Activated CD4-positive, alpha-beta T cell treated with anti-CD3 and anti-CD28 coated beads for 36 hours (primary cell): ENCODE measurements at regions of chr6 and their contacts with region 1.

Region 1: GRCh38 chr6:56902641-56903464 is 52.1 kb upstream of the BEND6 start:
- DNase-seq: no peak
- ATAC-seq: no peak
- H3K4me3 Mint-ChIP-seq: no peak overlapping the region
- H3K27ac Mint-ChIP-seq: no peak overlapping the region
- H3K4me1 Mint-ChIP-seq: no peaks in the 10 kb centered on the region
- H3K27me3 Mint-ChIP-seq: peaks cover 9% of the 10 kb centered on the region

Region 2: GRCh38 chr6:56962451-56962850 is 59.6 kb after region 1 on chr6:
- CTCF ChIA-PET with region 1: interaction called, 9 read pairs
- POLR2A ChIA-PET with region 1: no interaction called
- intact Hi-C with region 1: loop called in 1 of 2 experiments (anchors 2 kb)
- DNase-seq: no peak
- ATAC-seq: no peak
- H3K4me3 Mint-ChIP-seq: no peak overlapping the region
- H3K27ac Mint-ChIP-seq: no peak overlapping the region
- H3K4me1 Mint-ChIP-seq: no peaks in the 10 kb centered on the region
- H3K27me3 Mint-ChIP-seq: peaks cover 16% of the 10 kb centered on the region

Region 3: GRCh38 chr6:56977192-56977591 is 74.3 kb after region 1 on chr6:
- CTCF ChIA-PET with region 1: no interaction called
- POLR2A ChIA-PET with region 1: no interaction called
- intact Hi-C with region 1: no loop called
- DNase-seq: no peak
- ATAC-seq: no peak
- H3K4me3 Mint-ChIP-seq: no peak overlapping the region
- H3K27ac Mint-ChIP-seq: no peak overlapping the region
- H3K4me1 Mint-ChIP-seq: no peaks in the 10 kb centered on the region
- H3K27me3 Mint-ChIP-seq: no peaks in the 10 kb centered on the region

Region 4: DNA sequence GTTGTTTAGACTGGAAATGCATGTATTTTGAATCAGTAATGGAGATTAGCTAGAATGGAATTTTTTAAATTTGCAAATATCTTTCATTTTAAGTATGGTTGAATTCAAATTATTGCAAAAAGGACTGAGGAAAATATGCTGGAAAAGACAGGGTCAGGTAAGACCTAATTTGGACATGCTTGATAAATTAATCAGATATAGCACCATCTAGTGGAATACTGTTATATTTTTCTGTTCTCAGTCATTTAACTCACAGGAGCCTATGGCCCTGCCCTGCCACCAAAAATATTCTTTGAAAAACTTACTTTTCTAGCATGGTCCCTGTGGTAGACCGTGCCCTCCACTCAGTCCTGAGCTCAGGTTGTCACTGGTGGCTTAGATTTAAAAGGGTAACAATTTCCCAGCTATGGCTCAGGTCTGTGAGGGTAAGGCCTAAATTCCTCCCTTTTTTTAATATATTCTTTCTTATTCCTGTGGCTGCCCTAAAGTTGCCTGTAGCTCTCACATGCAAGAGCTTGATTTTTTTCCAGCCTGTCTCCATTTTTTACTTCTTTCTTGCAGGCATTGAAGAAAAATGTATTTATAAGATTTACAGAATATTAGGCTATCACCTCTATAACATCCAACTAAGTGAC is 118.3 kb after region 1 on chr6:
- CTCF ChIA-PET with region 1: interaction called, 13 read pairs
- POLR2A ChIA-PET with region 1: no interaction called
- intact Hi-C with region 1: loop called (anchors 1 kb)
- DNase-seq: no peak
- ATAC-seq: peak; percentile 39
- H3K4me3 Mint-ChIP-seq: no peak overlapping the region
- H3K27ac Mint-ChIP-seq: no peak overlapping the region
- H3K4me1 Mint-ChIP-seq: no peaks in the 10 kb centered on the region
- H3K27me3 Mint-ChIP-seq: peaks cover 2% of the 10 kb centered on the region